ENCODE measurements at regions of chr15 and their contacts with region 1.

Region 1: DNA sequence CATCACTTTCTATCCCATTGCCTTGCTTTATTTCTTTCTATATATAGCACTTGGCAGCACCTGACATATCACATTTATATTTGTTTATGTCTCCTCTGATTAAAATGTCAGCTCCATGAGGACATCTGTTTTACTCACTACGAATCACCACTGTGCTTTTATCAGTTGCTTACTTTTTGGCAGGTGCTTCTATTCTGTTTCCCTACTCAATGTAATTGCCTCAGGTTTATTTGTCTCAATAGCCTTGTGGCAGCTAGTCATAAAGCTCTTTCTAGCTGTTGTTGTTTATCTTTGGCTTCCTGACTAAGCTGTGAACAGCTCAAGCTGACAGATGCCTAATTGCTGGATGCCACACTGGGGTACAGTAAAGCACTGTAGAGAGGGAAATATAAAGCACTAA is 85.5 kb downstream of the VPS13C start:
- DNase-seq: no peak
- H3K4me3 ChIP-seq: no peak overlapping the region
- H3K27ac ChIP-seq: peak overlapping the region in 1 of 4 donors; percentile 6
- H3K4me1 ChIP-seq: peaks cover 0 to 16% (median 5%) of the 10 kb centered on the region in 4 donors
- H3K27me3 ChIP-seq: no peaks in the 10 kb centered on the region
- CTCF ChIP-seq: no peak
- EP300 ChIP-seq: no peak
- POLR2A ChIP-seq: no peak

Region 2: DNA sequence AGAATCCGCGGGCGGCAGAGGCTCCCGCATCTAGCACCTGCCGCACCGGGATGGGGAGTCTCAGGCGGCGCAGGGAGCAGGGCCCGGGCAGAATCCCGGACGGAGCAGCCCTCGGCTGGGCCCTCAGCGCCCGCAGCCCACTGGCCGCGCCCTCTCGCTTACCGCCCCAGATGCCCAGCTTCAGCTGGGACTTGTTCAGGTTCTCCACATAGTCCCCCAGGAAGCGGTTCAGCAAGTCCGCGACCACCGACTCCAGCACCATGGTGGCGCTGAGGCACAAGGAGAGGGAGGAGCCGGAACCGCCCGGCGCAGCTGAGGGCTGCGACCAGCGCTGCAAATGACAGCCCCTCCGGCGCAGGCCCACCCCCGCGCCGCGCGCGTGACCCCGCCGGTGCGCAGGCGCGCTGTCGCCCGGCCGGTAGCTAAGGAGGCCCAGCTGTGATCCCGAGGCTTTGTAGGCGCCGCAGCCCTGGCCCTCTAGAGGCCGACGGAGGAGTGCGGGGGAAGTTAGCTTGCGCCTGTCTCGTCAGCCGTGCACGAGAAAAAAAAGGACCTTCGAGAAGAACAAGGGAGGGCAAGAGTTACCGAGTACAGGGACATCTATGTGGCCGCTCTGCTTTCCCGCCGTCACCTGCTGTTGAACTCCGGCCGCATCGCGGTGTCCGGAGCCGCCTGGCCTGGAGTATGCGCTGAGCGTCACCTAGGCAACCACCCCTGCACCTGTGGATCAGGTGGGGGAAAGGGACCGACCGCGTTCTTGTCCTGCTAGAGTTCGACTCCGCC is 85.5 kb after region 1 on chr15 and contains the start of gene VPS13C:
- in situ Hi-C with region 1: loop called in 1 of 4 experiments (anchors 10 kb)
- intact Hi-C with region 1: no loop called
- DNase-seq: peak; percentile 94
- H3K4me3 ChIP-seq: peak within 1 kb of the TSS; percentile 79 to 100 (median 92)
- H3K27ac ChIP-seq: peak within 1 kb of the TSS; percentile 97 to 99 (median 98)
- H3K4me1 ChIP-seq: peaks cover 0 to 28% (median 13%) of the 10 kb centered on the region in 4 donors
- H3K27me3 ChIP-seq: no peaks in the 10 kb centered on the region
- CTCF ChIP-seq: peak; percentile 69 to 94 (median 80)
- EP300 ChIP-seq: no peak
- POLR2A ChIP-seq: peak; percentile 80
- total RNA-seq, gene VPS13C: 48.3 to 105 (median 73.2) TPM

Region 3: GRCh38 chr15:62071711-62072308 is 97.1 kb after region 1 on chr15:
- in situ Hi-C with region 1: loop called in 2 of 4 experiments (anchors 10 kb)
- intact Hi-C with region 1: no loop called
- DNase-seq: no peak
- H3K4me3 ChIP-seq: no peak overlapping the region
- H3K27ac ChIP-seq: no peak overlapping the region
- H3K4me1 ChIP-seq: peaks cover 0 to 19% (median 14%) of the 10 kb centered on the region in 4 donors
- H3K27me3 ChIP-seq: peaks cover 10% of the 10 kb centered on the region
- CTCF ChIP-seq: peak; percentile 48 to 77 (median 68)
- EP300 ChIP-seq: no peak
- POLR2A ChIP-seq: no peak

Region 4: GRCh38 chr15:63041974-63042819 is 1067.4 kb after region 1 on chr15 and contains the start of gene TPM1:
- in situ Hi-C with region 1: no loop called
- intact Hi-C with region 1: no loop called
- DNase-seq: peak; percentile 82
- H3K4me3 ChIP-seq: peak within 1 kb of the TSS; percentile 80 to 88 (median 84)
- H3K27ac ChIP-seq: peak within 1 kb of the TSS; percentile 96 to 98 (median 96)
- H3K4me1 ChIP-seq: peaks cover 0 to 45% (median 24%) of the 10 kb centered on the region in 4 donors
- H3K27me3 ChIP-seq: peaks cover 26% of the 10 kb centered on the region
- CTCF ChIP-seq: no peak
- EP300 ChIP-seq: no peak
- POLR2A ChIP-seq: peak; percentile 90
- total RNA-seq, gene TPM1: 775 to 2,480 (median 1,140) TPM

Measured in transverse colon (tissue), 4 donors.